ENCODE measurements at regions of chr2 and their contacts with region 1.

Region 1: GRCh38 chr2:112048887-112049286 is 6.2 kb upstream of the TMEM87B start:
- DNase-seq: no peak
- H3K4me3 ChIP-seq: no peak overlapping the region
- H3K27ac ChIP-seq: no peak overlapping the region
- H3K4me1 ChIP-seq: peaks cover 6 to 39% (median 23%) of the 10 kb centered on the region in 6 donors
- H3K27me3 ChIP-seq: no peaks in the 10 kb centered on the region
- CTCF ChIP-seq: peak; percentile 60 to 86 (median 81)
- POLR2A ChIP-seq: no peak

Region 2: DNA sequence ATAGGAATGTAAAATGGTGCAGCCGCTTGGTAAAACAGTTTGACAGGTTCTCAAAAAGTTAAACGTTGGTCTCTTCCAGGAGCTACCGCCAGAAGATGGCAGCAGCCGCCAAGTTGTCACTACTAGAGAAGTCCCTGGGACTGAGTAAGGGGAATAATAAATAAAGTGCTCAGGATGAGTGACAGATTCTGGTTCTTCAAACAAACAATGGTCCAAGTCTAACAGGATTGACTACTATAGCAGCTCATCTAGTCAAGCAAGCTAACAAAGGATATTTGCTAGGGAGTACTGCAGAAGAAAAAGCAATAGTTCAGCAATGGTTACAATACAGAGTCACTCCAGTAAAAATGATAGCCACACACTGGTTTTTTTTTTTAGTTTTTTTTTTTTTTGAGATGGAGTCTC is 161.1 kb before region 1 on chr2:
- intact Hi-C with region 1: loop called (anchors 5 kb)
- DNase-seq: peak; percentile 87
- H3K4me3 ChIP-seq: no peak overlapping the region
- H3K27ac ChIP-seq: no peak overlapping the region
- H3K4me1 ChIP-seq: peaks cover 3 to 21% (median 13%) of the 10 kb centered on the region in 6 donors
- H3K27me3 ChIP-seq: no peaks in the 10 kb centered on the region
- CTCF ChIP-seq: peak in 9 of 11 experiments; percentile 27 to 69 (median 61)
- POLR2A ChIP-seq: no peak

Region 3: DNA sequence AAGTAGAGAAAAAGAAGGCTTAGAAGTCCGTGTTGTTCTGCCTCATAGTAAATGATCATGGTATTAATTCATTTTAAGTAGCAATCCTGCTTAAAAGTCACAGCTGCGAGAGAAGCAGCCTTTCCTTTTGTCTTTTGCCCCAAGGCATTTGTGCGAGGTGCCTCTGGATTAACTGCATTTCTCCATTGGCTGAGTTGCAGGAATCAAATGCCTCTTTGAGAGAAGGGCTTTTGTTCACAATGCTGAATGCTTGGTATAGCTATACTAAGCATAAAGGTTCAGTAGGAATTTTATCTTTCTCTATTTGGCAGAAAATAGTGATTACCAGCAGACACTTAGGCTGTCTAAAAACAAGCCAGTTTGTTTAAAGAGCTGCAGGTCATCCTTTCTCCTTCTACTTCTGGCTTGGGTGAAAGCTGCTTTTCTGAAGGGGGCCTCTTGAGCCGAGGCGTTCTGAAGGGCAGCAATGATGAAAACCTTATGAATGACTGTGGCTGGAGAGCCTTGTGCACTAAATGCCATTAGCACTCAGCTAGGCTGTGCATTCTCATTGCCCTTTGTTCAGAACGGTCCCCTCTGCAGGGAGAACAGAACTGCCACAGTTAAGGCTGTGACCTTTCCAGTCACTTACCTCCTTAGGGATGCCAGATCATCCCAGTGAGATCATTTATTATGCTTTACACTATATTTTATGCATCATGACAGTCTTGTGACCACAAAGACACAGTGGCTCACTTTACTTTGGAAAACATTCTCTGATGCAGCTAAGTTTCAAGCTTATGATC is 62.6 kb before region 1 on chr2:
- intact Hi-C with region 1: no loop called
- DNase-seq: no peak
- H3K4me3 ChIP-seq: no peak overlapping the region
- H3K27ac ChIP-seq: no peak overlapping the region
- H3K4me1 ChIP-seq: no peaks in the 10 kb centered on the region
- H3K27me3 ChIP-seq: no peaks in the 10 kb centered on the region
- CTCF ChIP-seq: no peak
- POLR2A ChIP-seq: no peak